Psoas muscle (tissue), 8 donors: ENCODE measurements at regions of chr6 and their contacts with region 1.

Region 1: DNA sequence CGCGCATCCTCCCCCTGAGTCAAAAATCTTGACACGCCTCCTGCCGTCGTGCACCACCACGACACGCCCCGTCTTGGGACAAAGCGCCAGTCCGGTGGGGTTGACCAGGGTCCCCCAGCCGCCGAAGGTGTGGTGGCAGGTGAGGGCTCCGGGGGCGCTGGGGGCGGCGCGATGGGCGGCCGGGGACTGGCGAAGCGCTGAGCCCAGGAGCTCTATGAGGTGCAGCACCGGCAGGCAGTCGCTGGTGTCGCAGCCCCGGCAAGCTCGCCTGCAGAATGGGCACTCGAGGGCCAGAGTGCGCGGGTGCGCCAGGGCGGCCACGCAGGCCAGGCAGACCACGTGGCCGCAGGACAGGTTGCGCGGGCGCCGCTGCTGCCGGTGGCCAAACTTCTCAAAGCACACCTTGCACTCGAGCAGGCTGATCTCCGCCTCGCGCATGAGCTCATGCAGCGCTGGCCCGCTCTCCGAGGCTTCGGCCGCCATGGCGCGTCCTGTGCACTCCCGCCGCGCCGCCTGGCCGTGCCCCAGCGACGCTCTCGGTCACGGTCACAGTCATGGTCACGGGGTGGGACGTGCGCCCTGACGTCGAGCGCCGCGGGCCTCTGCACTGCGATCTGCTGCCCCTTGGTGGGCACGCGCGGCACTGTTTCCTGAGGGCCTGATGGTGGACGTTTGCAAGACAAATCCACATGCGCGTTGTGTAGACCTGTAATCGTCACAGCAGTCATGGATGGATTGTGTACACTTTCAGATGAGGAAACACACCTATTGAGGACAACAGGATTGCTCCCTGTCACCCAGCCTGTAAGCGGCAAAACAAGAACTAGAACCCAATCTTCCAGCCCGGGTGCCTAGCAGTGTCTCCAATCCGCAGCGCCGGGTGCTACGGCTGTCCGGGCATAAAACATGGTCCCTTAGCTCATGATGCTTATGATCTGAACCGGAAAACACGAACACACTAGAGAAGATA is at the start of gene NHLRC1:
- DNase-seq: peak; percentile 92 to 95
- ATAC-seq: peak; percentile 99 to 100 (median 99)
- H3K4me3 ChIP-seq: peak within 1 kb of the TSS; percentile 73
- H3K27ac ChIP-seq: peak within 1 kb of the TSS; percentile 77
- H3K4me1 ChIP-seq: peaks cover 12% of the 10 kb centered on the region
- H3K27me3 ChIP-seq: no peaks in the 10 kb centered on the region
- CTCF ChIP-seq: peak; percentile 98
- total RNA-seq, gene NHLRC1: 0.84 to 3.0 (median 1.6) TPM

Region 2: DNA sequence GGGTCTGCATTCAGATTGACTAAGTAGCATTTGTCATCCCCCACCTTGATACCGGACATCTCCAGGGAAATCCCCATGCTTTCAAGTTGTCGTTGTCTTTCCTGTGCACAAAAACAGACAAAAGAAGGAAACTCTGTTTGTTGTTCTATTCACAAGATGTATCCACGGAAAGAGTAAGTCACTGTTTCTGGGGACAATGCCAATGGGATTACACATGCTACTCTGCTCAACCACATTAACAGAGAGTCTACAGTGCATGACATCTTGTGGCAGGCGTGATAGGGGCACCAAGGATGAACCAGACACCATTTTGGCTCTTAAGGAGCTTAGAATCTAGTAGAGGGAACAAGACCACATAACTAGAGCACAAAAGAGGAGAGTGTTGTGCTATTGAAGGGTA is 291.3 kb before region 1 on chr6:
- intact Hi-C with region 1: loop called (anchors 5 kb)
- DNase-seq: no peak
- ATAC-seq: peak; percentile 48 to 79 (median 75)
- H3K4me3 ChIP-seq: no peak overlapping the region
- H3K27ac ChIP-seq: no peak overlapping the region
- H3K4me1 ChIP-seq: no peaks in the 10 kb centered on the region
- H3K27me3 ChIP-seq: no peaks in the 10 kb centered on the region
- CTCF ChIP-seq: no peak